Activated naive CD4-positive, alpha-beta T cell treated with anti-CD3 and anti-CD28 coated beads for 36 hours (primary cell): ENCODE measurements at regions of chr9 and their contacts with region 1.

Region 1: DNA sequence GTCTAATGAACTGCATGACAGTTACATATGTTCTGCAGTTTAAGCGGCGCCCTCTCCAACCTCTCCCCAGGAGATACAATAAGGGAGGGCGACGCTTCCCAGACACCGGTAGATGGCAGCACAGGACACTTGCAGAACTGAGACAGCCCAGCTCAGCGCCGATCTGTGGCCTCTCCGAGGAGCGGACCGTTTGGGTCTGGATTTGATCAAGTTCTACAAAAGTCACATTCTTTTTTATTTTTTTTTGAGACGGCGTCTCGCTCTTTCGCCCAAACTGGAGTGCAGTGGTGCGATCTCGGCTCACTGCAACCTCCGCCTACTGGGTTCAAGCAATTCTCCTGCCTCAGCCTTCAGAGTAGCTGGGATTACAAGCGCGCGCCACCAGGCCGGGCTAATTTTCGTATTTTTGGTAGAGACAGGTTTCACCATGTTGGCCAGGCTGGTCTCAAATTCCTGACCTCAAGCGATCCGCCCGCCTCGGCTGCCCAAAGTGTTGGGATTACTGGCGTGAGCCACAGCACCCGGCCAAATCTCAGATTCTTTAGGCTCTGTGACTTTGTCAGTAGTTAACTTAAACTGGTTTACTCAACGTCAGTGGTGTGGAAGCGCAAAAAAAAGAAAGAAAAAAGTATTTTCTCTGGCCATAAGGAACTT is 1.4 kb upstream of the ATOSB start:
- DNase-seq: peak; percentile 94
- H3K4me3 Mint-ChIP-seq: peak overlapping the region; percentile 89
- H3K27ac Mint-ChIP-seq: peak overlapping the region; percentile 80
- H3K4me1 Mint-ChIP-seq: peaks cover 38% of the 10 kb centered on the region
- H3K27me3 Mint-ChIP-seq: no peaks in the 10 kb centered on the region

Region 2: GRCh38 chr9:35102926-35103659 is 13.9 kb before region 1 on chr9 and contains the start of gene STOML2:
- CTCF ChIA-PET with region 1: interaction called, 10 read pairs
- intact Hi-C with region 1: loop called (anchors 2 kb)
- DNase-seq: peak; percentile 96
- H3K4me3 Mint-ChIP-seq: peak within 1 kb of the TSS; percentile 99
- H3K27ac Mint-ChIP-seq: peak within 1 kb of the TSS; percentile 93
- H3K4me1 Mint-ChIP-seq: peaks cover 31% of the 10 kb centered on the region
- H3K27me3 Mint-ChIP-seq: no peaks in the 10 kb centered on the region
- total RNA-seq, gene STOML2: 165 to 168 TPM

Region 3: GRCh38 chr9:35277628-35278359 is 160.8 kb after region 1 on chr9:
- CTCF ChIA-PET with region 1: no interaction called
- intact Hi-C with region 1: loop called (anchors 1 kb)
- DNase-seq: no peak
- H3K4me3 Mint-ChIP-seq: no peak overlapping the region
- H3K27ac Mint-ChIP-seq: no peak overlapping the region
- H3K4me1 Mint-ChIP-seq: peaks cover 30% of the 10 kb centered on the region
- H3K27me3 Mint-ChIP-seq: peaks cover 3% of the 10 kb centered on the region

Region 4: DNA sequence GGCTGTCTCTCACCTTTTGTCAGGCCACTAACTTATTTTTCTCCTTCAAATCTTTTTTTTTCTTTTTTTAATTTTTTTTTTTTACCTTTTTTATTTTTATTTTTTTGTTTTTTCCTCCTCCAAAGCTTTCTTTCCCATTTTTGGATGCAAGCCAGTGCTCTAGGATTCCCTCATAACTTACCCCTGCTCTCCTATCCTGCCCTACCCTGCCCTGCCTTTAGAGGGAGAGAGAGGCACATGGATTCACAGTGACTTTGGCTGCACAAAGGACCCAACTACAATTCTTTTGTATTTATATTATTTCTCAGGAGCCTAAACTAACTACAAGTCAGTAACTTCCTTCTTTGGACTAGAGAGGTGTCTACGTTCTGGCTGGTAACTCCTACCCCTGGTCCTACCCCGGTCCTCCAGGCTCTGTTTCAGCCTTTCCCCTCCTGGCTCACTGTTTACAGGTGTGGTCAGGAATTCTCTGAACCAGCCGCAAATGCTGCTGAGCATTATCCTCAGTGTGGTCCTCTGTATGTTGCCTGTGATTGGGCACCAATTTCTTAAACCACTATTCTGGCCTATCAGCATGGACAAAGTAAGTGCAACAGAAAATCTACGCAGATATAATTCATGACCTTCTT is 364.4 kb after region 1 on chr9:
- CTCF ChIA-PET with region 1: interaction called, 21 read pairs
- intact Hi-C with region 1: loop called (anchors 1 kb)
- DNase-seq: peak; percentile 57
- H3K4me3 Mint-ChIP-seq: no peak overlapping the region
- H3K27ac Mint-ChIP-seq: no peak overlapping the region
- H3K4me1 Mint-ChIP-seq: no peaks in the 10 kb centered on the region
- H3K27me3 Mint-ChIP-seq: peaks cover 6% of the 10 kb centered on the region

Region 5: DNA sequence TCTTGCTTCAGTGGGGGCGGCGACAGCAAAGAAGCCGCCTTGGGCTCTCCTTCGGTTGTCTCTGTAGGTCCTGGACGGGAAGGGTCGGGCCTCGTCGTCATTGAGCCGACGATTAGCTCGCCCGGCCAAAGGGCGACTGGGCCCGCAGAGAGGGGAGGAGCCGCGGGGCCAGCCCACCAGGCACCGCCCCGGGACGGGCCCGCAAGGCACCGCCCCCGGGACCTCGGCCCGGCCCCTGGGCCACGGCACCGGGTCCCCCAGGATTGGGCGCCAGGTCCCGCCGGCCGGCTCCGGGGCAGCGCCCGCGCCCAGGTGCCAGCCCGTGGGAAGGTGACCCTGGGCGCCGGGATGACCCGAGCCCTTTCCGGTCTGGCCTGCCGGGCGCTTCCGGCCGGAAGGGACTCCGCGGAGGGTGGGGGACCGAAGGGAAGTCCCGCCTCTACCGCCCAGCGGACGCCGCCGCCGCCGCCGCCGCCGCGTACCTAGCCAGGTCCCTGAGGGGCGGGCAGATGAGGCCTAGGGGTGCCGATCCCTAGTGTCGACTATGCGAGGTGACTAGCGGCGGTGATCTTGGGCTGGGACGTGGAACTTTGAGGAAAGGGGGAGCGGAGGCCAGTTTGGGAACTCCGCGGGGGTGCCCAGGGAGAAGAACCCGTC is 632.0 kb after region 1 on chr9 and contains the starts of genes GBA2 and RGP1:
- CTCF ChIA-PET with region 1: no interaction called
- intact Hi-C with region 1: loop called (anchors 5 kb)
- DNase-seq: peak; percentile 67
- H3K4me3 Mint-ChIP-seq: peak within 1 kb of the TSS; percentile 89
- H3K27ac Mint-ChIP-seq: peak within 1 kb of the TSS; percentile 88
- H3K4me1 Mint-ChIP-seq: peaks cover 32% of the 10 kb centered on the region
- H3K27me3 Mint-ChIP-seq: no peaks in the 10 kb centered on the region
- total RNA-seq, gene GBA2: 20.3 to 22.7 TPM
- total RNA-seq, gene RGP1: 12.0 to 13.3 TPM